ENCODE measurements at regions of chr19 and their contacts with region 1.

Region 1: DNA sequence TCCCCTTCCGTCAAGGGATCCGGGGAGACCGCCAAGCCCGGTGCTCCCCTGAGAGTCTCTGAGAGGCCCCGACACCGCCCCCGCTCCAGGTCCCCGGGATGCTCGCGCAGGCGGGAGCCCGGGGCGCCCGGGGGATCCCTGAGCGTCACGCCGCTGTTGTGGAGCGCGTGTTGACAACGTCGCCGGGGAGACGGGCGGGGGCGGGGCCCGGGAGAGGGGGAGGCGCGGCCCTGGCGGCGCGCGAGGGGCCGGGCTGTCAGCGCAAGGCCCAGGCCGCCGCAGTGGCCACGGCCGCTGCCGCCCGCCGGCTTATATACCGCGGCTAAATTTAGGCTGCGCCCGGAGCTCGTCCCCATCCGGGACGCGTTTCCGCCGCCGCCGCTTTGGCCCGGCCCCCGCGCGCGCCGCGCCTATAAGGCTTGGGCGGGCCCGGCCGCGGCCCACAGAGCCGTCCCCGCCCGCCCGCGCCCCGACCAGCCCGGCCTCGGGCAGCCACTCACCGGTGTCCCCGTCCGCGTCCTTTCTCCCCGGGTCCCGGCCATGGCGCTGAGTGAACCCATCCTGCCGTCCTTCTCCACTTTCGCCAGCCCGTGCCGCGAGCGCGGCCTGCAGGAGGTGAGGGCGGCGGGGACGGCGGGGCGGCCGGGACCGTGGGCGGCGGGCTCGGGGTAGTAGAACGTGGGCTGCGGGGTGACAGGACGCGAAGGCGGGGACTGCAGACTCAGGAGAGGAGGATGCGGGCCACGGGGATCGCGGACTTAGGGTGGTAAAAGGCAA is at the start of gene KLF2:
- DNase-seq: peak; percentile 94
- H3K4me3 ChIP-seq: peak within 1 kb of the TSS; percentile 71 to 93 (median 90)
- H3K27ac ChIP-seq: peak within 1 kb of the TSS; percentile 79
- H3K4me1 ChIP-seq: peaks cover 29% of the 10 kb centered on the region
- H3K27me3 ChIP-seq: no peaks in the 10 kb centered on the region
- CTCF ChIP-seq: no peak
- POLR2A ChIP-seq: peak; percentile 99
- total RNA-seq, gene KLF2: 23.4 and 37.7 TPM in 2 replicates

Region 2: DNA sequence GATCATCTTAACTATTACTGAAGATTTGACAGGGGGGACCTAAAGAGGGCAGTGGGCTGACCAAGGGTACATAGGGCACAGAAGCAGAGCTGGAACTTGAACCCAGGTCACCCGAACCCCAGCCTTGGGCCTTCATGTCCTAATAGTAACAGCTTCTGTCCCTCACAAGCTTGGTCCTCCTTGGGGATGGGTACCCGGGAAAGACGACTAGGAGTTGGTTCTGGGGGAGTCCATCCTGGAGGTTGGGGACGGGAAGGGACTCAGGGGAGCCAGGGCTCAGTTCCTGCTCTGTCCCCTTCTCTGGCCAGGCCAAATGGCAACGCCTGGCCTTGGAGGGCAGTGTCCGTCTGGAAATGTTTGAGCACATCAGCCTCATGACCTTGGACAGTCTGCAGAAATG is 749.2 kb before region 1 on chr19:
- CTCF ChIA-PET with region 1: no interaction called
- POLR2A ChIA-PET with region 1: no interaction called
- dilution Hi-C with region 1: no loop called
- intact Hi-C with region 1: no loop called
- DNase-seq: no peak
- H3K4me3 ChIP-seq: no peak overlapping the region
- H3K27ac ChIP-seq: no peak overlapping the region
- H3K4me1 ChIP-seq: no peaks in the 10 kb centered on the region
- H3K27me3 ChIP-seq: no peaks in the 10 kb centered on the region
- CTCF ChIP-seq: no peak
- POLR2A ChIP-seq: no peak

Region 3: GRCh38 chr19:16076154-16076957 is 248.2 kb before region 1 on chr19 and contains the start of gene TPM4:
- CTCF ChIA-PET with region 1: no interaction called
- POLR2A ChIA-PET with region 1: no interaction called
- dilution Hi-C with region 1: no loop called
- intact Hi-C with region 1: loop called (anchors 10 kb)
- DNase-seq: peak; percentile 90
- H3K4me3 ChIP-seq: peak within 1 kb of the TSS; percentile 64 to 96 (median 95)
- H3K27ac ChIP-seq: peak within 1 kb of the TSS; percentile 100
- H3K4me1 ChIP-seq: peaks cover 39% of the 10 kb centered on the region
- H3K27me3 ChIP-seq: no peaks in the 10 kb centered on the region
- CTCF ChIP-seq: no peak
- POLR2A ChIP-seq: peak; percentile 89
- total RNA-seq, gene TPM4: 875 and 924 TPM in 2 replicates

Region 4: GRCh38 chr19:16259385-16260159 is 65.0 kb before region 1 on chr19:
- CTCF ChIA-PET with region 1: interaction called, 9 read pairs
- POLR2A ChIA-PET with region 1: interaction called, 14 read pairs
- dilution Hi-C with region 1: no loop called
- intact Hi-C with region 1: loop called (anchors 2 kb)
- DNase-seq: no peak
- H3K4me3 ChIP-seq: no peak overlapping the region
- H3K27ac ChIP-seq: peak overlapping the region; percentile 56
- H3K4me1 ChIP-seq: peaks cover 21% of the 10 kb centered on the region
- H3K27me3 ChIP-seq: no peaks in the 10 kb centered on the region
- CTCF ChIP-seq: no peak
- POLR2A ChIP-seq: no peak

Region 5: DNA sequence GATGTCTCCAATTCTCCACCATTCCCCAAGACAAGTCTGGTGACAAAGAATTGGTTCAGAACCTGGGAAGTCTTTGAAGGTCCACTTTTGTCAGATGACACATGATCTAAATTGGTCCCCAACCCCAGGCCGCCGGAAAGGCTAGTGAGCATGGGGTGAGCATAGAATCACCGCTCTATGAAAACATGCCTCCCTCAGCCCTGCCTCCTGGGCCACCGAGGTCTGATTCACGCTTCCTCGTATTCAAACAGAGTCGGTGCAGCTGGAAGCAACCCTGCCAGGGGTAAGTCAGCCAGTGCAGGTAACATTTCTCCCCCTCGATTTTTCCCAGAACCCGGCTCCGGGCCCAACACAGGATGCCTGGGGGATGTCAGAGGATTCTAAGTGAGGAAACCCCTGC is 33.9 kb before region 1 on chr19:
- CTCF ChIA-PET with region 1: interaction called, 4 read pairs
- POLR2A ChIA-PET with region 1: interaction called, 7 read pairs
- dilution Hi-C with region 1: no loop called
- intact Hi-C with region 1: loop called (anchors 1 kb)
- DNase-seq: peak; percentile 89
- H3K4me3 ChIP-seq: no peak overlapping the region
- H3K27ac ChIP-seq: peak overlapping the region; percentile 81
- H3K4me1 ChIP-seq: peaks cover 34% of the 10 kb centered on the region
- H3K27me3 ChIP-seq: no peaks in the 10 kb centered on the region
- CTCF ChIP-seq: no peak
- POLR2A ChIP-seq: no peak

Region 6: GRCh38 chr19:16308081-16308480 is 16.5 kb before region 1 on chr19:
- CTCF ChIA-PET with region 1: no interaction called
- POLR2A ChIA-PET with region 1: no interaction called
- dilution Hi-C with region 1: no loop called
- intact Hi-C with region 1: no loop called
- DNase-seq: no peak
- H3K4me3 ChIP-seq: no peak overlapping the region
- H3K27ac ChIP-seq: no peak overlapping the region
- H3K4me1 ChIP-seq: peaks cover 5% of the 10 kb centered on the region
- H3K27me3 ChIP-seq: no peaks in the 10 kb centered on the region
- CTCF ChIP-seq: no peak
- POLR2A ChIP-seq: no peak

Region 7: GRCh38 chr19:16338470-16339360 is 14.1 kb after region 1 on chr19:
- CTCF ChIA-PET with region 1: interaction called, 33 read pairs
- POLR2A ChIA-PET with region 1: interaction called, 22 read pairs
- dilution Hi-C with region 1: no loop called
- intact Hi-C with region 1: no loop called
- DNase-seq: peak; percentile 86
- H3K4me3 ChIP-seq: no peak overlapping the region
- H3K27ac ChIP-seq: peak overlapping the region; percentile 91
- H3K4me1 ChIP-seq: peaks cover 34% of the 10 kb centered on the region
- H3K27me3 ChIP-seq: no peaks in the 10 kb centered on the region
- CTCF ChIP-seq: peak in 1 of 2 donors; percentile 4
- POLR2A ChIP-seq: no peak

Region 8: GRCh38 chr19:16457195-16457953 is 132.8 kb after region 1 on chr19:
- CTCF ChIA-PET with region 1: no interaction called
- POLR2A ChIA-PET with region 1: no interaction called
- dilution Hi-C with region 1: no loop called
- intact Hi-C with region 1: no loop called
- DNase-seq: peak; percentile 84
- H3K4me3 ChIP-seq: no peak overlapping the region
- H3K27ac ChIP-seq: peak overlapping the region; percentile 66
- H3K4me1 ChIP-seq: peaks cover 19% of the 10 kb centered on the region
- H3K27me3 ChIP-seq: no peaks in the 10 kb centered on the region
- CTCF ChIP-seq: no peak
- POLR2A ChIP-seq: peak; percentile 38